GM10248 (cell line): ENCODE measurements at regions of chr16 and their contacts with region 1.

Region 1: GRCh38 chr16:19086322-19087199 is 19.1 kb downstream of the COQ7 start:
- DNase-seq: peak; percentile 87
- CTCF ChIP-seq: peak; percentile 96

Region 2: DNA sequence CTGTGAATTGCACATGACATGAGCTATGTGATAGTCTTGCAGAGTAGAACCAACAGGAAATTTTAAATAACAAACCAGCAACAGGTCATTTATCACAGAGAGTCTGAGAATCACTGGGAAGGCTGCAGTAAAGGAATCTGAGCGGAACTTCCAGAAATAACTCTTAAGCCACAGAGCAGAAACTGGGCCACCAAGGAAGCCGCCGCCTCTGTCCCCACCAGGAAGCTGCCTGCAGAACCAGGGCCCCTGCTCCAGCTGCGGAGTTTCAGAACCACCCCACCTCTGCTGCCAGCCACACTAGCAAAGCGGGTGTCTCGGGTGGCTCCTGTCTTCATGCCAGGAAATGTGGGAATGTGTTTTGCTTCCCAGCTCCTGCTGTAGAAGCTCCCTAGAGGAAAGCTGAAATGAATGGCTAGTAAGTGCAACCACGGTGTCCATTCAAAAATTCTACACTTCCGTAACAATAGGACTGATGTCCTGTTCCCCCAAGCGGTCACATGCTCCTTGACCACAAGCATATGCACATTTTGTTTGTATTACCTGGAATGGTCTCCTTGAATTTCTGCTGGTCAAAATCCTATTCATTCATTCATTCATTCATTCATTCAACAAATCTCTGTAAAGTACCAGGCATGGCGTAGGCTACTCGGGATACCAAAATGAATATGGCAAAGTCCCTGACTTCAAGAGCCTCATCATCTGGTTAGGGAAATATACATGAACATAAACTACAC is 19.5 kb after region 1 on chr16:
- CTCF ChIA-PET with region 1: interaction called, 11 read pairs
- POLR2A ChIA-PET with region 1: no interaction called
- DNase-seq: no peak
- CTCF ChIP-seq: no peak

Region 3: DNA sequence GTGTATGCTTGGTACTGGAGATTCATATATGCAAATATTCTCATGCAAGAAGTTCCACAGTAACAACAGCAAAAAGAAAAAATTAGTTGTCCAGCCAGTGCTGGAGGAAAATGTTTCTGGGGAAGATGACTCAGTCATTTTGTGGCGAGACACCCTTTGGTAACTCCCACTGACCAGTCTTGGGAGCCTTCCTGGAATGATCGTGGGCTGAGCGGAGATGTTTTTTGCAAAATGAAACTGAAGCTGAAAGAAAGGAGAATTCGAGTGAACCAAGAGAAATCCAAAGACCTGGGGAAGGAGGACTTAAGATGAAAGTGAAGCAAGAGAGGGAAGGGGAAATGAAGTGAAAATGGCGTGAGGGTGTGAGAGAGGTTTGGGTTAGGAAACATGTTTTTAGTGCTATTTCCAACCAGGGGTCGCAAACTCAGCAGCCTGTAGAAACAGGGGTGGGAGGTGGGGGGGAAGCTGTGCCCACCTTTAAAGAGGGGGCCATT is 32.4 kb after region 1 on chr16:
- CTCF ChIA-PET with region 1: interaction called, 16 read pairs
- POLR2A ChIA-PET with region 1: no interaction called
- DNase-seq: no peak
- CTCF ChIP-seq: no peak

Region 4: DNA sequence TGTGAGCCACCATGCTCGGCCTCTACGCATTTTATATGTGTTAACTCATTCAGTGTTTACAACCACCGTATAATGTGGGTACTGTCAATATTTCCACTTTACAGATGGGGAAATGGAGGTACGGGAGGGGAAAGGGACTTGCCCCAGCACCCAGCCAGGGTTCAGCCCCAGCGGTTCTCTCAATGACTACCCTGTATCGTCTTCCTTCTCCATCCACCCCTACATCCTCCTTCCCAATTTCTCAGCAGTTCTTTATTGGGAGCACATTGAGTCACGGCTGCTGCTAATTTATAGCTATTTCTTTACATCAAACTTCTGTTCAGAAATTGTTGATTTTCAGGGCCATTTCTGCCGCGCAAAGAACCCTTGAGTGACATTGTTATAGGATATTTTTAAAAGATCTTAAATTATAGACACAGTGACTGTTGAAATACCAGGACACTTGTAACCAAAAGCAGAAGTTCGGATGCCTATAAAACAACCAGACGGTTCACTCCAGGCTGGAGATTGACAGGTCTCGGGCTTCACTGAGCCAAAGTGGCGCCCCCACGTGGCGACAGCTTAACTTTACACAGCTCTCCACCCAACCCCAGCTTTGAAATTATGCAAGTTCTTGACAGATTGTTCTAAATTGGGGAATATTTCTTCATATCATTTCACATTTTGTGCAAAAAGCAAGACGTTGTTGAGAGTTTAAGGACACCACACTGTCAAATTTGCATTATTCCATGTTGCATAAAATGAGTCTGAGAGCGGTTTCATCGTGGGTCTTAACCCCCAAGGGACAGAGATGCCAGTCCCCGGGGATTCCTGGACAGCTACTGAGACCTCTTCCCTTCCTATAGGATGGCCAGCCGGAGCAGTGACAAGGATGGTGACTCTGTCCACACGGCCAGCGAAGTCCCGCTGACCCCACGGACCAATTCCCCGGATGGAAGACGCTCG is 93.3 kb after region 1 on chr16:
- CTCF ChIA-PET with region 1: interaction called, 53 read pairs
- POLR2A ChIA-PET with region 1: no interaction called
- DNase-seq: peak; percentile 81
- CTCF ChIP-seq: peak; percentile 45

Region 5: GRCh38 chr16:19307587-19308241 is 221.2 kb after region 1 on chr16:
- CTCF ChIA-PET with region 1: no interaction called
- POLR2A ChIA-PET with region 1: no interaction called
- DNase-seq: no peak
- CTCF ChIP-seq: no peak

Region 6: DNA sequence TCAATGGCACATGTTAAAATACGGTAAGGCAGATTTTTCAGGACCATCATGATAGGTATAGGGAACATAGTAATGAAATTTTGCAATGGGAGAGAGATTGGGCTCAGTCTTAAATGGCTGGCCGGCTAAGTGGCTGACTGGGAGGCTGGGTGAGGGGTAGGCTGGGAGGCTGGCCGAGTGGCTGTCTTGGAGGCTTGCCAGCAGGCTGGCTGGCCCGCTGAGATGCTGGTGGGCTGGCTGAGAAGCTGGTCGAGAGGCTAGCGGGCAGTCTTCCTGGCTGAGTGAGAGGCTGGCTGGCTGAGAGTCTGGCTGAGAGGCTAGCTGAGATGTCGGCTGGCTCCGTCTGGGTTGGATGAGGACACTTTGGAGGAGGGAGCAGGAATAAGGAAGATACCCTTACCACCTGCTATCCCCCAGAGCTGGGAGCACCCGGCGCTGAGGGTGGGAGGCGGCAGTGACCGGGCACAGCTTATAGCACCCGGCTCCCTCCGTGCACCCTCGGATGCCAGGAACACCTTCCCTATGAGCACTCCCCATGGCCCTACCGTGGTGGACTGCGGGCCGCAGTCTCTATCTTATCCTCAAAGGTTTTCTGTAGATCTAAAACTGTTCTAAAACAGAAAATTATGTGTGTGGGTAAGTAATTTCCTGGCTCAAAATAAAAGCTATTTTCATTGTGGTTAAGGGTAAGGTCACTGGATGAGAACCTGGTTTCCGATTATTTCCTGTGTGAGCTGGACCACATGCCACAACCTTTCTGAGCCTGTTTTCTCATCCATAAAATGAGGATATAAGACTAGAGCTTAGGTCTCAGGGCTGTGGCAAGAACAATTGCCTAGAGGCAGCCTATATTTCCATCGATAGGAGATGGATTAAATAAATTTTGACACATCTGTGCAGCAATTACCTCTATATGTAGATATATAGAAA is 296.6 kb after region 1 on chr16:
- CTCF ChIA-PET with region 1: interaction called, 75 read pairs
- POLR2A ChIA-PET with region 1: no interaction called
- DNase-seq: no peak
- CTCF ChIP-seq: no peak